ENCODE measurements at regions of chr18 and their contacts with region 1.

Region 1: DNA sequence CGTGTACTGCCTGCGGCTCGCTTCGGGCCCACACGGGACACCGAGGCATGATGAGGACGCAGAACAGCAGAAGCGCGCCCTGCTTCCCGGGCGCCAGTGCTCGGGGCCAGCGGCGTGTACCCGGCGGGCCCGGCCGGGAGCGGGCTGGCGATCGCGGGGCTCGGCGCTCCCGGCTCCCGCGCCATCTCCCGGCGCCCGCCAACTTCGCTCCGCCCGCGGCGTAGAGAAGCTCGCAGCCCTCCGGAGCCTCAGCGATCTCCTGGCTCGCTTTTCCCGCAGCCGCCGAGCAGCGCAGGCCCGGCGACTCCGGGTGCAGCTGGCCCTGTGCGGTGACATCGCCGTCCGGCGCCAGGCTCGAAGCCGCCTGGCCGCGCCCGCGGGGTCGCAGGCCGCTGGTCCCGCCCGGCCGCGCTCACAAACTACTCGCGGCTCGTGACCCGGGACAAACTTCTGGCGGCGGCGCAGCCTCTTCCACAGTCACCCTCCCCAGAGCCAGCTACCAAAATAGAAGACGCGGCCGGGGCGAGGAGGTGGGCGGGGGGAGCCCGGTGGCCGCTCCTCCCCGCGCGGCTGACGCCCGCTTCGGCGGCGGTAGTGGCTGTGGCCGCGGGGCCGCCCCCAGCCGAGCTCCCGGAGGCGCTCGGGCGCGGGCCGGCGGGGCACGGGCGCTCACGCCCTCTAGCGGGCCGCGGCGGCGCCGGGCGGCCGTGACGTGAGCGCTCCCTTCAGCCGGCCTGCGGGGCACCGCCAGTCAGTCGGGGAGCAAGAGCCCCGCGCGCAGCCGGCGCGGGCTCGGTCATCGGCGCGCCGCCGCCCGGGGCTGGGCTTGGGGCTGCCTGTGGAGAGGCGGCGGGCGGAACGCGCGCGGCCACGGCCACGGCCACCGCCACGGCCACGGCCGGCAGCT is at the start of gene PTPRM:
- DNase-seq: peak; percentile 97
- H3K4me3 ChIP-seq: peak within 1 kb of the TSS; percentile 87 to 98 (median 94)
- H3K27ac ChIP-seq: peak within 1 kb of the TSS; percentile 94 to 96 (median 95)
- H3K4me1 ChIP-seq: peaks cover 0 to 49% (median 36%) of the 10 kb centered on the region in 4 donors
- H3K27me3 ChIP-seq: no peaks in the 10 kb centered on the region
- CTCF ChIP-seq: no peak
- EP300 ChIP-seq: peak in 1 of 4 donors; percentile 30
- POLR2A ChIP-seq: no peak
- total RNA-seq, gene PTPRM: 62.8 to 151 (median 73.4) TPM

Region 2: DNA sequence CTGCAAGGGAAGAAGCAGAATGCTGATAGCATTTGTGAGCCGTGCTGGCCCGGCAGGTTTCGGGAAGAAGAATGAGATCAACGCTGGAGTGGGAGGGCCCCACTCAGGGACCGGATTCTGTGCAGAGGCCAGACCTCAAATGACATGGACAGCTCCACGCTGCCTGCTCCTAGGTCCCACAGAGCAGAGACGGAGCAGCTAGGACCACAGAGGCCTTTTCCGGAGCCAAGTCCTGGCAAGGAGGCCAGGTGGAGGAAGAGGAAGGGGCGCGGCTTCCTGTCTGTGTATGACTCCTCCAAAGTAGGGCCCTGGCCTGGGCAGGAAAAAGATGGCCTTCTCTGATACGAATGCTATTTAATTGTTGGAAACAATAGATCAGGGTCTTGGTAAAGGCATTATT is 196.0 kb before region 1 on chr18:
- intact Hi-C with region 1: loop called (anchors 10 kb)
- DNase-seq: peak; percentile 69
- H3K4me3 ChIP-seq: peak overlapping the region in 1 of 4 donors; percentile 2
- H3K27ac ChIP-seq: peak overlapping the region; percentile 57 to 80 (median 72)
- H3K4me1 ChIP-seq: peaks cover 0 to 19% (median 15%) of the 10 kb centered on the region in 4 donors
- H3K27me3 ChIP-seq: no peaks in the 10 kb centered on the region
- CTCF ChIP-seq: no peak
- EP300 ChIP-seq: no peak
- POLR2A ChIP-seq: no peak

Region 3: GRCh38 chr18:7482342-7482741 is 84.5 kb before region 1 on chr18:
- intact Hi-C with region 1: loop called (anchors 2 kb)
- DNase-seq: no peak
- H3K4me3 ChIP-seq: no peak overlapping the region
- H3K27ac ChIP-seq: peak overlapping the region in 3 of 4 donors; percentile 65 to 81 (median 75)
- H3K4me1 ChIP-seq: peaks cover 0 to 66% (median 29%) of the 10 kb centered on the region in 4 donors
- H3K27me3 ChIP-seq: no peaks in the 10 kb centered on the region
- CTCF ChIP-seq: no peak
- EP300 ChIP-seq: no peak
- POLR2A ChIP-seq: no peak

Region 4: DNA sequence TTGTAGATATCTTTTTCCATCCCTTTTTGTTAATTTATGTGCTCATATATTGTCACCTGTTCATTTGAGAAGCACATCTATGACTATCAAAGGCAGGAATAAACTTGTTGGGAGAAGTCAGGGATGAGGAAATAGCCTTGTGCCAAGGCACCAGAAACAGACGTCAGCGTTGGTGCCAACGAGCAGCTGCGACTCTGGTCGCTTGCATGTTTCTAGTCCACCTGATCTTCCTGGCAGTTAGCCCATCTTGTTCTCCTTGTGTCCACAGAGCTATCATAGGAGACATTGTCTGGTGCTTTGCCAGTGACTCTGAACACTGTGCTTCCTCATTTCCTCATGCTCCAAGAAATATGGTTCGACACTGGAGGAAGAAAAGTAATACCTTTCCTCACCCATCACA is 374.7 kb after region 1 on chr18:
- intact Hi-C with region 1: loop called (anchors 5 kb)
- DNase-seq: no peak
- H3K4me3 ChIP-seq: no peak overlapping the region
- H3K27ac ChIP-seq: no peak overlapping the region
- H3K4me1 ChIP-seq: peaks cover 0 to 23% (median 21%) of the 10 kb centered on the region in 4 donors
- H3K27me3 ChIP-seq: no peaks in the 10 kb centered on the region
- CTCF ChIP-seq: no peak
- EP300 ChIP-seq: no peak
- POLR2A ChIP-seq: no peak

Region 5: DNA sequence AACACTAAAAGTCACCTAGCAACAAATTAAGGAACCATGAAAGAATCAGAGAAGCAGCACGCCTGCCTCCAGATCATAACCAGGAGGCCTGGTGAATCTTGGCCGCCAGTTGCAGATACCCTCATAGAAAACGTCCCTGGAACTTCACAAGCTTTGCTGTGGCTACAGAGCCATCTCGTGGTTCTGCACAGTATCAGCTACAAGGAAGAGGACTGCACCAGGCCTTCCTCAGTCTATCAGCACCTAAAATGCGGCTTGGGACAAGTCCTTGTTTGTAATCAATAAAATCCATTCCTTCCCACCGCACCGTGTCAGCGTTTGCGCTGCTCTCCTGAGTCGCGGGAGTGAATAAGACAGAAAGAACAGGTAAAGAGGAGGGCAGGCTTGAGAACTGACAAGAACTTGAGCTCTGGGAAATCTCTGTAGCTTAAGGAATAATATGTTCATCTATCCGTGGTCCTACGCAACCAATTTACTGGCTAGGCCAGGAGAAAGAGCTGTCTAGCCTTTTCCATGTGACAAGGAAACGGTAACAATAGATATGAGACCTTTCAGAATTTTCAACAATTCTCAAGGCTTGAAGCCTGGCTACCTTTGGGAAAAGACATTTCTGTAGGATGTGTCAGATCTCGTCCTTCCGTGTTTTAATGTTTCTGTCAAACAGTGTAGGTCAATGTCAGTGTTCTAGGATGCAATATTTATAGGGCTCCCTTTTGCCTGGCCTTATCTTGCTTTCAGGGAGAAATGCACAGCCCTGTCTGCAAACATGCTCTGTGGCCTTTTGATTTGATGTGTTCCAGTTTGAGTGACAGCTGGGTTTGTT is 913.9 kb after region 1 on chr18:
- intact Hi-C with region 1: loop called (anchors 10 kb)
- DNase-seq: peak; percentile 73
- H3K4me3 ChIP-seq: no peak overlapping the region
- H3K27ac ChIP-seq: no peak overlapping the region
- H3K4me1 ChIP-seq: peaks cover 0 to 9% (median 0%) of the 10 kb centered on the region in 4 donors
- H3K27me3 ChIP-seq: no peaks in the 10 kb centered on the region
- CTCF ChIP-seq: peak in 3 of 4 experiments; percentile 20 to 53 (median 45)
- EP300 ChIP-seq: no peak
- POLR2A ChIP-seq: no peak

Measured in sigmoid colon (tissue), 7 donors.